OCI-LY7 (cell line): ENCODE measurements at regions of chr3 and their contacts with region 1.

Region 1: GRCh38 chr3:25831578-25831977 is 41.7 kb downstream of the OXSM start:
- DNase-seq: peak; percentile 88
- H3K4me3 ChIP-seq: peak overlapping the region; percentile 45
- H3K27ac ChIP-seq: peak overlapping the region; percentile 81
- H3K4me1 ChIP-seq: peaks cover 68% of the 10 kb centered on the region
- CTCF ChIP-seq: peak; percentile 80

Region 2: DNA sequence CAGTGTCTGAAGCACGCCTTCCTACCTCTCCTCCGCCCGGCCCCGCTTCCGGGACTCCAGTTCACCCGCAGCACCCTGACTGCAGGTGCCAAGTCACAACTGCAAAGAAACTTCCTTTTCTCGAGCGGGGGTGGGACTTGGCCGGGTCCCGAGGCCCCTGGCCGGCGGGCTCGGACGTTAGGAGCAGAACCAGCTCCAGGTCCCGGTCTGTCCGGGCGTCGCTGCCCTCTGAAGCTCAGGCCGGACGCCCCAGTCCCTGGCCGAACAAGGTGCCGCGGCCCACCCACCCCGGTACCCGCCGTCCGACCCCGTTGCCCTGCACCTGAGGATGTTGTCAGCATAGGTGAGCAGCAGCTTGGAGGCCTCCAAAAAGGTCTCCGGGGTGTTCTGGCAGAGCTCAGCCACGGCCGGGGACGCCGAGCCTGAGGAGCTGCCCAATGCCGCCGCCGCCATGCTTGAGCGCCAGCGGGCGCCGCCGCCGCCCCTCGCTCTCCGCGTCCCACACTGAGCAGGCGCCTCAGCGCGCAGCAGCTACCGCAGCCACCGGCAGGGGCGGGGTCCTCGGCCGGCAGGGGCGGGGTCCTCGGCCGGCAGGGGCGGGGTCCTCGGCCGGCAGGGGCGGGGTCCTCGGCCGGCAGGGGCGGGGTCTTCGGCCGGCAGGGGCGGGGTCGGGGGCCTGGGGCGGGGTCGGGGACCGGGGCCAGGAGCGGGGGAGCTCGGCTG is 48.5 kb before region 1 on chr3 and contains the start of gene NGLY1:
- CTCF ChIA-PET with region 1: interaction called, 4 read pairs
- POLR2A ChIA-PET with region 1: interaction called, 18 read pairs
- intact Hi-C with region 1: loop called (anchors 1 kb)
- DNase-seq: peak; percentile 91
- H3K4me3 ChIP-seq: peak within 1 kb of the TSS; percentile 90
- H3K27ac ChIP-seq: peak within 1 kb of the TSS; percentile 90
- H3K4me1 ChIP-seq: peaks cover 58% of the 10 kb centered on the region
- CTCF ChIP-seq: no peak
- total RNA-seq, gene NGLY1: 88.1 and 97.5 TPM in 2 replicates

Region 3: GRCh38 chr3:25789596-25790556 is 41.7 kb before region 1 on chr3 and contains the start of gene OXSM:
- CTCF ChIA-PET with region 1: interaction called, 5 read pairs
- POLR2A ChIA-PET with region 1: interaction called, 18 read pairs
- intact Hi-C with region 1: loop called (anchors 1 kb)
- DNase-seq: peak; percentile 97
- H3K4me3 ChIP-seq: peak within 1 kb of the TSS; percentile 81
- H3K27ac ChIP-seq: peak within 1 kb of the TSS; percentile 83
- H3K4me1 ChIP-seq: peaks cover 60% of the 10 kb centered on the region
- CTCF ChIP-seq: no peak
- total RNA-seq, gene OXSM: 9.5 and 17.3 TPM in 2 replicates

Region 4: DNA sequence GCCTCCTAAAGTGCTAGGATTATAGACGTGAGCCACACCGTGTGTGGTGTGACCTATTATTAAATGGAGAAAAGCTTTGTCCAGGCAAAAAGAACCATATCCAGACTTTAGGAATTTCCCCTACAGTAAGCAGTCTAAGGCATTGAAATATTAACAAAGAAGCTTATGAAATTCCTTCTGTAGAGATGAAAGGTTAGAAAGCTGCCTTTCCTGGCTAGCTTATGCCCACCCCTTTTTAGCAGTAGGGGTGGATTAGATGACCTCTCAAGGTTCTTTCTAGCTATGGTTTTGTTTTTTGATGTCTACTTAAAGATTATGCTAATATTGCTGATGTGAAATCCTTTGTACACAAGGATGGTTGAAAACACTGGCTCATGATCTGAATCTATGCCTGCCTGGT is 27.7 kb before region 1 on chr3:
- CTCF ChIA-PET with region 1: no interaction called
- POLR2A ChIA-PET with region 1: interaction called, 10 read pairs
- intact Hi-C with region 1: no loop called
- DNase-seq: no peak
- H3K4me3 ChIP-seq: no peak overlapping the region
- H3K27ac ChIP-seq: no peak overlapping the region
- H3K4me1 ChIP-seq: no peaks in the 10 kb centered on the region
- CTCF ChIP-seq: no peak

Region 5: GRCh38 chr3:25872200-25872877 is 40.8 kb after region 1 on chr3:
- CTCF ChIA-PET with region 1: no interaction called
- POLR2A ChIA-PET with region 1: no interaction called
- intact Hi-C with region 1: no loop called
- DNase-seq: no peak
- H3K4me3 ChIP-seq: no peak overlapping the region
- H3K27ac ChIP-seq: no peak overlapping the region
- H3K4me1 ChIP-seq: no peaks in the 10 kb centered on the region
- CTCF ChIP-seq: no peak